PC-9 (cell line): ENCODE measurements at regions of chr2 and their contacts with region 1.

Region 1: GRCh38 chr2:95231723-95232122 is 24.4 kb downstream of the ZNF892 start:
- DNase-seq: peak; percentile 73 to 80
- H3K4me3 ChIP-seq: no peak overlapping the region
- H3K27ac ChIP-seq: no peak overlapping the region
- H3K4me1 ChIP-seq: peaks cover 13% of the 10 kb centered on the region
- H3K27me3 ChIP-seq: no peaks in the 10 kb centered on the region; the same call in 1 of the 2 replicates
- CTCF ChIP-seq: peak; percentile 100

Region 2: GRCh38 chr2:95259765-95260417 is 28.2 kb after region 1 on chr2:
- CTCF ChIA-PET with region 1: no interaction called
- POLR2A ChIA-PET with region 1: interaction called, 29 read pairs
- intact Hi-C with region 1: no loop called
- DNase-seq: peak; percentile 30 to 74
- H3K4me3 ChIP-seq: no peak overlapping the region
- H3K27ac ChIP-seq: no peak overlapping the region
- H3K4me1 ChIP-seq: peaks cover 7% of the 10 kb centered on the region; the same call in 1 of the 2 replicates
- H3K27me3 ChIP-seq: peaks cover 29% of the 10 kb centered on the region; the same call in 1 of the 2 replicates
- CTCF ChIP-seq: no peak

Region 3: DNA sequence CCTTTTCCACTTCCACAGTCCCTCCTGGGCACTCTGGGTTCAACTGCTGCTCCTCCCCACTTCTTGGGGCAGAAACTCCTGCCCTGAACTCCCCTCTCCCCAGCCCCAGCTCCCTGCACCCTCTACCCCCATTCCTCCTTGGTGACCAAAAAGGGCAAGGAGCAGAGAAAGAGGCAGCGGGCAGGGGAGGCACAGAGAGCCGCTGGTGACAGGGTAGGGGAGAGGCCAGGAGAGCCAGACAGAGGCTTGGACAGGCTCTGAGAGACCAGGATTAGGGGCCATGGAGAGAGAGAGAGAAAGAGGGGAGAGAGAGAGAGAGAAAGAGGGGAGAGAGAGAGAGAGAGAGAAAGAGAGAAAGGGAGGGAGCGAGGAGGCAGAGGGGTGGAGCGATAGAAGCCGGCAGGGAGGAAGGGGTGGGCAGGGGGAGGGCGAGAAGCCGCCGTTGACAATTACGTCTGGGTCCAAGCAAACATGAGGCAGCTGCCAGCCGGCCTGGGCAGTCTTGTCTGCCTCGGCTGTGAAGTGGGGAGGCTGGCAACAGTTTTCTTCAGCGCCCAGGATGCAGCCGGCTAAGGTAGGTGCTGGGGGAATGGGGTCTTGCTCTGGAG is 65.3 kb after region 1 on chr2 and contains the start of gene KCNIP3:
- CTCF ChIA-PET with region 1: interaction called, 9 read pairs
- POLR2A ChIA-PET with region 1: interaction called, 10 read pairs
- intact Hi-C with region 1: no loop called
- DNase-seq: no peak
- H3K4me3 ChIP-seq: no peak within 1 kb of the TSS
- H3K27ac ChIP-seq: no peak within 1 kb of the TSS
- H3K4me1 ChIP-seq: peaks cover 34% of the 10 kb centered on the region
- H3K27me3 ChIP-seq: peaks cover 3% of the 10 kb centered on the region; the same call in 1 of the 2 replicates
- CTCF ChIP-seq: no peak
- total RNA-seq, gene KCNIP3: 3.5 and 4.5 TPM in 2 replicates

Region 4: GRCh38 chr2:95389245-95390119 is 157.8 kb after region 1 on chr2:
- CTCF ChIA-PET with region 1: interaction called, 11 read pairs
- POLR2A ChIA-PET with region 1: no interaction called
- intact Hi-C with region 1: no loop called
- DNase-seq: peak in 1 of 2 experiments; percentile 74
- H3K4me3 ChIP-seq: peak overlapping the region; percentile 18; the same call in 1 of the 2 replicates
- H3K27ac ChIP-seq: no peak overlapping the region
- H3K4me1 ChIP-seq: 0 out of 2 replicates have a peak, but pooled peaks cover 4% of the 10 kb centered on the region
- H3K27me3 ChIP-seq: peaks cover 20% of the 10 kb centered on the region; the same call in 1 of the 2 replicates
- CTCF ChIP-seq: peak; percentile 97

Region 5: DNA sequence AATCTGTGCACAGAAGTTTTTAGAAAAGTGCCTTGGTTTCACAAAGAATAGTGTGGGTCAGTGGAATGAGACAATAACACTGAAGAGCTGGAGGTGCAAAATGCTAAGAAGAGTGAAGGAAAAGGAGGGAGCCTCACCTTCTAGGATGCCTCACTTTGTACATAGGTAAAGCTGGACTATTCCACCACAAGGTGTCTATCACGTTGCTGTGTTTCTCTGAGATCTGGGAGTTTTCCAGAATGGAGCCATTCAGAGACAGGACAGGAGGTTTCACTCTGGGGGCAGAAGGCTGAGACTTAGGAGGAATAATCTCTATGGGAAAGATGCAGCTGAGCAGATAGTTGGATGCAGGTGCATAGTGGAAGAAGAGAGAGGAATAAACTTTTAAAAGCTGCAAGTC is 336.8 kb after region 1 on chr2:
- CTCF ChIA-PET with region 1: no interaction called
- POLR2A ChIA-PET with region 1: no interaction called
- intact Hi-C with region 1: no loop called
- DNase-seq: no peak
- H3K4me3 ChIP-seq: no peak overlapping the region
- H3K27ac ChIP-seq: no peak overlapping the region
- H3K4me1 ChIP-seq: peaks cover 17% of the 10 kb centered on the region
- H3K27me3 ChIP-seq: no peaks in the 10 kb centered on the region
- CTCF ChIP-seq: no peak

Region 6: GRCh38 chr2:95728878-95729596 is 497.3 kb after region 1 on chr2:
- CTCF ChIA-PET with region 1: no interaction called
- POLR2A ChIA-PET with region 1: no interaction called
- intact Hi-C with region 1: loop called (anchors 2 kb)
- DNase-seq: peak; percentile 74 to 82
- H3K4me3 ChIP-seq: no peak overlapping the region
- H3K27ac ChIP-seq: no peak overlapping the region
- H3K4me1 ChIP-seq: no peaks in the 10 kb centered on the region
- H3K27me3 ChIP-seq: peaks cover 5% of the 10 kb centered on the region; the same call in 1 of the 2 replicates
- CTCF ChIP-seq: peak; percentile 90